Adrenal gland (tissue), 19 donors: ENCODE measurements at regions of chr1 and their contacts with region 1.

Region 1: GRCh38 chr1:227437495-227438008 is 119.3 kb upstream of the CDC42BPA start:
- DNase-seq: peak in 1 of 7 donors; percentile 15
- H3K4me3 ChIP-seq: peak overlapping the region in 2 of 4 donors; percentile 24 to 53
- H3K27ac ChIP-seq: peak overlapping the region in 2 of 5 donors; percentile 15 to 24
- H3K4me1 ChIP-seq: peaks cover 0 to 15% of the 10 kb centered on the region in 2 donors
- H3K27me3 ChIP-seq: no peaks in the 10 kb centered on the region
- CTCF ChIP-seq: peak; percentile 13 to 73 (median 56)
- POLR2A ChIP-seq: no peak

Region 2: GRCh38 chr1:226912587-226913176 is 524.9 kb before region 1 on chr1:
- intact Hi-C with region 1: loop called in 1 of 2 experiments (anchors 10 kb)
- DNase-seq: peak; percentile 65 to 85 (median 73)
- H3K4me3 ChIP-seq: no peak overlapping the region
- H3K27ac ChIP-seq: no peak overlapping the region
- H3K4me1 ChIP-seq: peaks cover 3 to 7% of the 10 kb centered on the region in 2 donors
- H3K27me3 ChIP-seq: no peaks in the 10 kb centered on the region
- CTCF ChIP-seq: peak; percentile 49 to 74 (median 70)
- POLR2A ChIP-seq: no peak

Region 3: DNA sequence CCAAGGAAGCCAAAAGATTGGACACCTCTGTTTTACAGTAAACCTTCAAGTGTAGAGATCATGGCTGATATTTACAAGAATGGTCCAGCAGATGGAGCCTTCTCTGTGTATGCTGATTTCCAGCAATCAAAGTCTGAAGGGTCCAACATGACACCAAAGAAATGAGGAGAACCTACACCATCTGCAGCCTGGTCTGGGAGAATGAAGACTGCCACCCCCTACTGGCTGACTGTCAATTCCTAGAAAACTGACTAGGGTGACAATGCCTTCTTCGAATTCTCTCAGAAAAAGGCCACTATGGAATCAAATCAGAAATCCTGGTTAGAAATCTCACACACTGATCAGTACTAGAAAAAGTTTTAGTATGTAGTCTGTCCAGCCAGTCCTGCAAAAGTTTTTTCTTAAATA is 202.6 kb before region 1 on chr1:
- intact Hi-C with region 1: loop called (anchors 10 kb)
- DNase-seq: peak in 2 of 7 donors; percentile 18 to 35
- H3K4me3 ChIP-seq: no peak overlapping the region
- H3K27ac ChIP-seq: no peak overlapping the region
- H3K4me1 ChIP-seq: peaks cover 0 to 2% of the 10 kb centered on the region in 2 donors
- H3K27me3 ChIP-seq: no peaks in the 10 kb centered on the region
- CTCF ChIP-seq: peak; percentile 36 to 56 (median 44)
- POLR2A ChIP-seq: no peak

Region 4: DNA sequence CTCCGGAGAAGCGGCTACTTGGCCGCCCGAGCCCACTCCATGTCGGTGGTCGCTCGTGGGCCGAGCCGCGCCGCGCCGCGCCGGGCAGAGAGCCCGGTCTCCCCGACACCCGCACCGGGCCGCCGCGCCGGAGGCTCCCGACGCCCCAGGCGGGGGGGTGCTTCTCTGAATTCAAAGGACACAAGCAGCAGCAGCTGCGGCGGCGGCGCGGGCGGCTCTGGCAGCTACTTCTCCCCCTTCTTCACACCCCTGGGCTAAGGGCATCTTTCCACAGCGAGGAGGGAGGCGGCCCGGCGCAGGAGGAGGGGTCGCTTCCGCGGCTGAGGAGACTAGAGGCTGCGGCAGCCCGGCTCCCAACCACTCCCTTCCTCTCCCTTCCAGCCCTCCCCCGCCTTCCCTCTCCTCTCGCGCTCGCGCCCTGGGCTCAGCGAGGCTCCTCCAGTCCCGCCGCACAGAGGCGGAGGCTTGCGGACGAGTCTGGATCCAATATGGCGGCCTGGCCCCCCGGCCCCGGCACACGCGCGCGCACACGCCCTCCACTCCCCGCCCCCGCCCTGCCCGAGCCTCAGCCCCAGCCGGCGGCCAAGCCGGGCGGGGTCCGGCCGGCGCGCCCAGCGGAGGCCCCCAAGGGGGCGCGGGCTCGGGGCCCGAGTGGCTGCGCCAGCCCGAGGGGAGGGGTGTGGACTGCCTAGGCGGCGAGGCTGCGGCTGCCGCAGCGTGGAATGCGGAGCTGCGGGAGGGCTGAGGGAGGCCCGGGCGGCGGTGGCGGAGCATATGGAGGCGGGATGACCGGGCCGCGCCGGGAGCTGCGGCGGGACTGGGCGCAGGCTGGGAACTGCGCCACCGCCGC is 119.3 kb before region 1 on chr1 and contains the start of gene CDC42BPA:
- intact Hi-C with region 1: loop called in 1 of 2 experiments (anchors 10 kb)
- DNase-seq: peak; percentile 83 to 93 (median 85)
- H3K4me3 ChIP-seq: peak within 1 kb of the TSS; percentile 44 to 96 (median 93)
- H3K27ac ChIP-seq: peak within 1 kb of the TSS; percentile 74 to 98 (median 95)
- H3K4me1 ChIP-seq: peaks cover 6 to 13% of the 10 kb centered on the region in 2 donors
- H3K27me3 ChIP-seq: no peaks in the 10 kb centered on the region
- CTCF ChIP-seq: no peak
- POLR2A ChIP-seq: peak; percentile 42 to 64
- total RNA-seq, gene CDC42BPA: 32.8 to 73.8 (median 38.4) TPM

Region 5: DNA sequence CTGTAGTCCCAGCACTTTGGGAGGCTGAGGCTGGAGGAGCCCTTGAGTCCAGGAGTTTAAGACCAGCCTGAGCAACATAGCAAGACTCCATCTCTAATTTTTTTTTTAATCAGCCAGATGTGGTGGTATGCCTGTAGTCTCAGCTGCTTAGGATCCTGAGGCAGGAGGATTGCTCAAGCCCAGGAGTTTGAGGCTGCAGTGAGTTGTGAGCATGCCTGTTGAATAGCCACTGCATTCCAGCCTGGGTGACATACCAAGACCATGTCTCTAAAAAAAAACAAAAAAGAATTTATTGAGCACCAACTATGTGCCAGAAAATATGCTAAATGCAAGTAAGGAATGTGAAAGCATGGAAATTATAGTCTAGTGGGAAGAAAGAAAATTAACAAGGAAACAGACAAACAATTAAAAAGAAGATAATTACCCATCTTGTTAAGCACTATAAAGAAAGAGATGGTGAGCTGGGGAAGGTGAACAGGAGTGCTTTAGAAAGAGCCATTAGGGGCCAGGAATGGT is 21.8 kb after region 1 on chr1:
- intact Hi-C with region 1: no loop called
- DNase-seq: no peak
- H3K4me3 ChIP-seq: no peak overlapping the region
- H3K27ac ChIP-seq: no peak overlapping the region
- H3K4me1 ChIP-seq: no peaks in the 10 kb centered on the region
- H3K27me3 ChIP-seq: no peaks in the 10 kb centered on the region
- CTCF ChIP-seq: no peak
- POLR2A ChIP-seq: no peak